H1 (cell line): ENCODE measurements at regions of chr17 and their contacts with region 1.

Region 1: GRCh38 chr17:61525631-61526030 is 65.4 kb downstream of the NACA2 start:
- DNase-seq: no peak
- H3K4me3 ChIP-seq: no peak overlapping the region
- H3K27ac ChIP-seq: no peak overlapping the region
- H3K4me1 ChIP-seq: no peaks in the 10 kb centered on the region
- H3K27me3 ChIP-seq: no peaks in the 10 kb centered on the region
- CTCF ChIP-seq: no peak
- EP300 ChIP-seq: no peak
- POLR2A ChIP-seq: no peak
- RAD21 ChIP-seq: no peak

Region 2: GRCh38 chr17:61514501-61514900 is 11.1 kb before region 1 on chr17:
- CTCF ChIA-PET with region 1: interaction called, 16 read pairs
- POLR2A ChIA-PET with region 1: no interaction called
- DNase-seq: no peak
- H3K4me3 ChIP-seq: no peak overlapping the region
- H3K27ac ChIP-seq: no peak overlapping the region
- H3K4me1 ChIP-seq: peaks cover 0 to 2% (median 0%) of the 10 kb centered on the region in 4 experiments; a peak in 1 of 7 replicates
- H3K27me3 ChIP-seq: no peaks in the 10 kb centered on the region
- CTCF ChIP-seq: no peak
- EP300 ChIP-seq: no peak
- POLR2A ChIP-seq: no peak
- RAD21 ChIP-seq: no peak